ENCODE measurements at regions of chr22 and their contacts with region 1.

Region 1: GRCh38 chr22:24417901-24418641 is 9.3 kb upstream of the ADORA2A start:
- DNase-seq: no peak
- ATAC-seq: no peak
- H3K4me3 ChIP-seq: no peak overlapping the region
- H3K4me3 Mint-ChIP-seq: no peak overlapping the region
- H3K27ac ChIP-seq: no peak overlapping the region
- H3K27ac Mint-ChIP-seq: peak overlapping the region; percentile 49
- H3K4me1 ChIP-seq: peaks cover 4% of the 10 kb centered on the region
- H3K4me1 Mint-ChIP-seq: peaks cover 8% of the 10 kb centered on the region
- H3K27me3 ChIP-seq: no peaks in the 10 kb centered on the region
- H3K27me3 Mint-ChIP-seq: no peaks in the 10 kb centered on the region
- CTCF ChIP-seq: no peak

Region 2: DNA sequence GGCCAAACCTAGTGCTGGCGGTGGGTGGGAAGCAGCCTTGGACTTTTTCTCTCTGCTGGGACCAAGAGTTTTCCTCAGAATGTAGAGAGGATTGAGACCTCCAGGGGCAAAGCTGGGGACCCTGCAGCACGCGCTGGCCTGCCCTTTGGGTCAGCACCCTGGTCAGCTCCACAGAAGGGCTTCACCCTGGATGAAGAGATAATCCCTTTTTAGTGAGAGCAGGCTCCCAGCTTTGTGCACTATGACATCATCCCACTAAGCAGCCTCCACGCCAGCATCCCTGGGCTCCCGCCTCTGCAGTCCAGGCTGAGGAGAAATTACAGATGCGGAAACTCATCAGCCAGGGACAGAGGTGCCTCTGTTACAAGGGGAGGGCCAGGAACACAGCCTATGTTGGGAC is 809.5 kb before region 1 on chr22:
- CTCF ChIA-PET with region 1: no interaction called
- POLR2A ChIA-PET with region 1: no interaction called
- intact Hi-C with region 1: no loop called
- DNase-seq: no peak
- ATAC-seq: no peak
- H3K4me3 ChIP-seq: no peak overlapping the region
- H3K4me3 Mint-ChIP-seq: no peak overlapping the region
- H3K27ac ChIP-seq: no peak overlapping the region
- H3K27ac Mint-ChIP-seq: no peak overlapping the region
- H3K4me1 ChIP-seq: no peaks in the 10 kb centered on the region
- H3K4me1 Mint-ChIP-seq: no peaks in the 10 kb centered on the region
- H3K27me3 ChIP-seq: no peaks in the 10 kb centered on the region
- H3K27me3 Mint-ChIP-seq: no peaks in the 10 kb centered on the region
- CTCF ChIP-seq: no peak

Region 3: GRCh38 chr22:24503137-24503842 is 85.2 kb after region 1 on chr22:
- CTCF ChIA-PET with region 1: interaction called, 26 read pairs
- POLR2A ChIA-PET with region 1: no interaction called
- intact Hi-C with region 1: loop called (anchors 1 kb)
- DNase-seq: peak; percentile 28 to 79 (median 66)
- ATAC-seq: peak; percentile 88
- H3K4me3 ChIP-seq: no peak overlapping the region
- H3K4me3 Mint-ChIP-seq: no peak overlapping the region
- H3K27ac ChIP-seq: no peak overlapping the region
- H3K27ac Mint-ChIP-seq: no peak overlapping the region
- H3K4me1 ChIP-seq: peaks cover 6% of the 10 kb centered on the region
- H3K4me1 Mint-ChIP-seq: peaks cover 9% of the 10 kb centered on the region
- H3K27me3 ChIP-seq: no peaks in the 10 kb centered on the region
- H3K27me3 Mint-ChIP-seq: no peaks in the 10 kb centered on the region
- CTCF ChIP-seq: peak; percentile 57

Measured in CD8-positive, alpha-beta T cell (primary cell).